Dendritic cell treated with granulocyte-macrophage colony-stimulating factor and Interleukin-4, amounts not matched to agents 40 ng/mL and 50 ng/mL, for 4 days (primary cell): ENCODE measurements at regions of chr15 and their contacts with region 1.

Region 1: GRCh38 chr15:51334011-51334451 is 4.4 kb downstream of the CYP19A1 start:
- H3K4me3 Mint-ChIP-seq: no peak overlapping the region
- H3K27ac Mint-ChIP-seq: no peak overlapping the region
- H3K4me1 Mint-ChIP-seq: peaks cover 23% of the 10 kb centered on the region
- H3K27me3 Mint-ChIP-seq: peaks cover 4% of the 10 kb centered on the region

Region 2: DNA sequence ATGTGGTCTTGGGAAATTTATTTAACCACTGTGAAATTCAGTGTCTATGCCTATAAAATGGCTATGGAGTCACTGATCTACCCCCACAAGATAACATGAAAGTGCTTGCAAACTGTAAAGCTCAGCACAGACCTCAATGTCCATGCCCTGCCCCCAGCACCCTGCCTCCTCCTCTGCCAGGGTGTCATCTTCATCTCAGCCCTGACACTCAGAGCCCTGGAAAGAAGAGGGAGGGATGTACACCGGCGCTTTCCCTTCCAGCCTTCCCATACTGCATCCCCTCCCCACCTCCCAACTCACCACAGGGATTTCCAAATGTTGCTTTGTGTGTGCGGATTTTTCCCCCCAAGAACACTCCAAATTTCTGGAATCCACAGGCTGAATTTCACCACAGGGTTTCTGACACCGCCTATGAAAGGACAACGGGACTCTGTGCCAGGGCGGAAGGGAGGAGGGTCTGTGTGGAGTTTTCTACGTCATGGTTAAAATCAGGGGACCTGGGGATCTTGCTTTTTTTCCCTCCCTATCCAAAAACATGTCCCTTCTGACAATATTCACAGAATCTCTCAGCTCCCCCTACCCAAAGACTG is 10.4 kb before region 1 on chr15:
- intact Hi-C with region 1: loop called (anchors 1 kb)
- H3K4me3 Mint-ChIP-seq: no peak overlapping the region
- H3K27ac Mint-ChIP-seq: peak overlapping the region; percentile 68
- H3K4me1 Mint-ChIP-seq: peaks cover 33% of the 10 kb centered on the region
- H3K27me3 Mint-ChIP-seq: no peaks in the 10 kb centered on the region